ENCODE measurements at regions of chr7 and their contacts with region 1.

Region 1: DNA sequence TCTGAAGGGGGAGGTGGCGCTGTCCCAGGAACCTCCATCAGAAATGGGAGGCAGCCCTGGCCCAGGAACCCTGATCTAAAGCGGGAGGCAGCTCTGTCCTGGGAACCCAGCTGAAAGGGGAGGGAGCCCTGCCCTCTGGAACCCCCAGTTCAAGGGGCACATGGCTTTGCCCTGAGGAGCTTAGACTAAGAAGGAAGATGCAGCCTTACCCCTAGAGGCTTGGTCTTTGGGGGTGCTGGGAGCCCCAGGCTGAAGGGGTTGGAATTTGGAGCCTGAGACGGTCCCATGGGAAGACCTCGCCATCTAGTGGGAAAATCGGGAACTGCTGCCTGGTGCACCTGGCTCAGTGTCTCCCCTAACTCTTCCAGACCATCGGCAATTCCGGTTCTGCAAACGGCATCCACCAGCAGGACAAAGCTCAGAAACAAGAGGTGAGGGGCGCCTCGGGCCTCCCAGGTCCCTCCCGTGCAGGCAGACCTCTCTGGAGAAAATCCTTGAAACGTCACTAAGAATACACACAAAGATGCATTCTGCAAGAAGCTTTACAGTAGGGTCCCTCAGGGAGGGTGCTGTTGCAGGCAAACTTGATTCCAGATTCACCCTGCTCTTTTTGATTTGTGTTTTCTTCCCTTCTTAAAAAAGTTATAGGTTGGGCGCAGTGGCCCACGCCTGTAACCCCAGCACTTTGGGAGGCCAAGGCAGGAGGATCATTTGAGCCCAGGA is 52.4 kb upstream of the GTF2IRD1 start:
- DNase-seq: peak; percentile 91
- H3K4me3 ChIP-seq: no peak overlapping the region
- H3K27ac ChIP-seq: no peak overlapping the region
- H3K4me1 ChIP-seq: no peaks in the 10 kb centered on the region
- H3K27me3 ChIP-seq: no peaks in the 10 kb centered on the region
- CTCF ChIP-seq: peak; percentile 100
- EP300 ChIP-seq: no peak
- RAD21 ChIP-seq: peak; percentile 97

Region 2: GRCh38 chr7:73865738-73866445 is 535.4 kb before region 1 on chr7:
- CTCF ChIA-PET with region 1: interaction called, 11 read pairs
- POLR2A ChIA-PET with region 1: no interaction called
- DNase-seq: peak; percentile 85
- H3K4me3 ChIP-seq: no peak overlapping the region
- H3K27ac ChIP-seq: peak overlapping the region in 1 of 2 experiments; percentile 91; a peak in 2 of 4 replicates
- H3K4me1 ChIP-seq: peaks cover 0 to 35% of the 10 kb centered on the region in 2 experiments; a peak in 1 of 4 replicates
- H3K27me3 ChIP-seq: no peaks in the 10 kb centered on the region
- CTCF ChIP-seq: peak; percentile 95
- EP300 ChIP-seq: peak in 1 of 2 experiments; percentile 62; a peak in 1 of 4 replicates
- RAD21 ChIP-seq: peak; percentile 96

Region 3: DNA sequence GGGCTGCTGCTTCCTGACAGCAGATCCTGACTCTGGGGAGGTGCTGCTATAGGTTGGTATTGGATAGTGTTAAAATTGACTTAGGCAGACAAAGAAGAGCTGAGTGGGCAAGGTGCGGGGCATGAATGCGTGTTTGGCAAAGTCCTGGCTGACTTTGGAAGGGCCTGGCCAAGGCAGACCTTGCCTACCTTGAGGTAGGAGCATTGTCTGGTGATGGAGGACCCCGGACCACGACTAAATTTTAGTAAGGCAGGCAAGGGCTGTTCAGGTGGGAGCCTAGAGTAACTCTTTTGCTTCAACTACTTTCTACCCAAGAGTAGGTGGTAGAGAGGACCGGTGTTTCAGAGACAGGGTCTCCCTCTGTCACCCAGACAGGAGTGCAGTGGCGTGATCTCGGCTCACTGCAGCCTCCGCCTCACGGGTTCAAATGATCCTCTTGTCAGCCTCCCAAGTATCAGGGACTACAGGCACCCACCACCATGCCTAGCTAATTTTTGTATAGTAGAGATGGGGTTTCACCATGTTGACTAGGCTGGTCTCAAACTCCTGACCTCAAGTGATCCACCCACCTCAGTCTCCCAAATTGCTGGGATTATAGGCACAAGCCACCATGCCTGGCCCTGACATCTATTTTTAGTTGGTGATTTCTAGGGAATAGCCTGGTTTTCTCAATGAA is 203.7 kb before region 1 on chr7:
- CTCF ChIA-PET with region 1: interaction called, 537 read pairs
- POLR2A ChIA-PET with region 1: no interaction called
- DNase-seq: no peak
- H3K4me3 ChIP-seq: no peak overlapping the region
- H3K27ac ChIP-seq: no peak overlapping the region
- H3K4me1 ChIP-seq: no peaks in the 10 kb centered on the region
- H3K27me3 ChIP-seq: no peaks in the 10 kb centered on the region
- CTCF ChIP-seq: no peak
- EP300 ChIP-seq: no peak
- RAD21 ChIP-seq: no peak

Region 4: DNA sequence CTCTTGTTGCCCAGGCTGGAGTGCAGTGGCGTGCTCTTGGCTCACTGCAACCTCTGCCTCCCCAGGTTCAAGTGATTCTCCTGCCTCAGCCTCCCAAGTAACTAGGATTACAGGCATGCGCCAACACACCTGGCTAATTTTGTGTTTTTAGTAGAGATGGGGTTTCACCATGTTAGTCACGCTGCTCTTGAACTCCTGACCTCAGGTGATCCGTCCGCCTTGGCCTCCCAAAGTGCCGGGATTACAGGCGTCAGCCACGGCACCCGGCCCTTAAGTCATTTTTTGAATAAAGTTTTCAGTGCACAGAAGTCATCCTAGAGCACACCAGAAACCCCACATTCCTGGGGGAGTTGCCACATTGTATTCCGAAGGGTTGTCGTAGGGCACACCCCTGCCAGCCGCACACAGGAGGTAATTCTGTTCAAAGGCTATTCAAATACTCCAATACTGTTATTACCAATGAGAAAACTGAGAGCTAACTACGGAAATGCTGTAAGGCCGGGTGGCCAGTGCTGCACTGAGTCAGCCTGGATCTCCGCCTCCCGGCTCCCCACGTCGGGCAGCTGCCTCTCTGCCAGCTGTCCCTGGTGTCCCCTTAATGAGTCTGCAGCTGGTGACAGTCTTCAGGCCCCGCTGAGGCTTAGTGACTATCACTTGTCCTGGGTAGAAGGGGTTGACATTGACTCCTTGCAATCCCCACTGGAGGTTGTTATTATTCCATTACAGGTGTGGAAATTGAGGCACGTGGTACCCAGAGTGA is 138.5 kb before region 1 on chr7:
- CTCF ChIA-PET with region 1: interaction called, 42 read pairs
- POLR2A ChIA-PET with region 1: no interaction called
- DNase-seq: no peak
- H3K4me3 ChIP-seq: no peak overlapping the region
- H3K27ac ChIP-seq: no peak overlapping the region
- H3K4me1 ChIP-seq: no peaks in the 10 kb centered on the region
- H3K27me3 ChIP-seq: no peaks in the 10 kb centered on the region
- CTCF ChIP-seq: no peak
- EP300 ChIP-seq: no peak
- RAD21 ChIP-seq: no peak

Region 5: DNA sequence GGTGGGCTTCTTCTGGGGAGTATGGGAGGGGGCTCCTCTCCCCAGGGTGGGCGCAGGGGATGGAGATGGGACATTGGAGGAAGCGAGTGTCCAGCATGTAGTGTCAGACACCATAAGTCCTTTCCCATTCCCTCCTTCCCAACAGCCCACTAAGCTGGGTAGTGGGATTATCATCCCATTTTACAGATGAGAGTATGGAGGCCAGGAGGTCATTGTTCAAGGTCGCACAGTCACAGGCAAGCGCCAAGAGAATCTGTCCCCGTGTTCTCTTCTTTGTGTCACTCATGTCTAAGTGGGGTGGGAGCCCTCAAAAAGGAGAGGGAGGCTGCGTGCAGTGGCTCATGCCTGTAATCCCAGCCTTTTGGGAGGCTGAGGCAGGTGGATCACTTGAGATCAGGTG is 47.3 kb before region 1 on chr7:
- CTCF ChIA-PET with region 1: interaction called, 12 read pairs
- POLR2A ChIA-PET with region 1: no interaction called
- DNase-seq: no peak
- H3K4me3 ChIP-seq: no peak overlapping the region
- H3K27ac ChIP-seq: peak overlapping the region in 1 of 2 experiments; percentile 72; a peak in 1 of 4 replicates
- H3K4me1 ChIP-seq: peaks cover 0 to 4% of the 10 kb centered on the region in 2 experiments; a peak in 1 of 4 replicates
- H3K27me3 ChIP-seq: no peaks in the 10 kb centered on the region
- CTCF ChIP-seq: no peak
- EP300 ChIP-seq: no peak
- RAD21 ChIP-seq: no peak

Region 6: DNA sequence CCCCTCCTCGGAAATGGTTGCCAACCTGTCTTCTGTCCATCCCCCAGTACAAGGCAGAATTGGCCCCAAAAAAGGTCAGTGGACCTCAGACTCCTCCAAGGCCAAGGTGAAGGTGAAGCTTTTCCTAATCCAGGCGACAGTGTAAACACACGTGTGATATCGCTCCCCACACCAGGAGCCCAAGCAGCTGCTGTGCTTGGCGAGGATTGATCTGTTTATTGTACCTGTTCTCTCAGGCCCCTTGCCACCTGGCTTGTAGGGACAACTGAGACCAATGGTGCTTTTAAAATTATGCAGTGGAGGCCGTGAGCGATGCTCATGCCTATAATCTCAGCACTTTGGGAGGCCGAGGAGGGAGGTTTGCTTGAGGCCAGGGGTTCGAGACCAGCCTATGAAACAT is 13.7 kb before region 1 on chr7:
- CTCF ChIA-PET with region 1: interaction called, 66 read pairs
- POLR2A ChIA-PET with region 1: no interaction called
- DNase-seq: no peak
- H3K4me3 ChIP-seq: no peak overlapping the region
- H3K27ac ChIP-seq: no peak overlapping the region
- H3K4me1 ChIP-seq: no peaks in the 10 kb centered on the region
- H3K27me3 ChIP-seq: no peaks in the 10 kb centered on the region
- CTCF ChIP-seq: no peak
- EP300 ChIP-seq: no peak
- RAD21 ChIP-seq: no peak

Region 7: DNA sequence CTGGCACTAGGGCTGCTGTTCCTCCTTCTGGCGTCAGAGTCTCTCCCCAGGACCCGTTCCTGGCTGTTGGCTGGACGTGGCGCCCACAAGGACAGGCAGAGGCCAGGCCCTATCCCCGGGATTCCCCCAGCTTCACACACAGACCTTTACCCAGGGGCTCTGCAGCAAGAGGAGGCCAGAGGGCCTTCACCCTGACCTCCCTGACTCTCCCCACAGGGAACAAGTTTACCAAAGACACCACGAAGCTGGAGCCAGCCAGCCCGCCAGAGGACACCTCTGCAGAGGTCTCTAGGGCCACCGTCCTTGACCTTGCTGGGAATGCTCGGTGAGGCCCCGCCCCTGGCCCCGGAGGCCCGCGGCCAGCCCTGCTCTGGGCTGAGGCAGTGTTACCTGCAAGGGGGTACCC is 134.7 kb after region 1 on chr7:
- CTCF ChIA-PET with region 1: no interaction called
- POLR2A ChIA-PET with region 1: no interaction called
- DNase-seq: no peak
- H3K4me3 ChIP-seq: no peak overlapping the region
- H3K27ac ChIP-seq: no peak overlapping the region
- H3K4me1 ChIP-seq: no peaks in the 10 kb centered on the region
- H3K27me3 ChIP-seq: no peaks in the 10 kb centered on the region
- CTCF ChIP-seq: no peak
- EP300 ChIP-seq: no peak
- RAD21 ChIP-seq: no peak

Measured in SK-N-SH (cell line).